ENCODE measurements at regions of chr12 and their contacts with region 1.

Region 1: DNA sequence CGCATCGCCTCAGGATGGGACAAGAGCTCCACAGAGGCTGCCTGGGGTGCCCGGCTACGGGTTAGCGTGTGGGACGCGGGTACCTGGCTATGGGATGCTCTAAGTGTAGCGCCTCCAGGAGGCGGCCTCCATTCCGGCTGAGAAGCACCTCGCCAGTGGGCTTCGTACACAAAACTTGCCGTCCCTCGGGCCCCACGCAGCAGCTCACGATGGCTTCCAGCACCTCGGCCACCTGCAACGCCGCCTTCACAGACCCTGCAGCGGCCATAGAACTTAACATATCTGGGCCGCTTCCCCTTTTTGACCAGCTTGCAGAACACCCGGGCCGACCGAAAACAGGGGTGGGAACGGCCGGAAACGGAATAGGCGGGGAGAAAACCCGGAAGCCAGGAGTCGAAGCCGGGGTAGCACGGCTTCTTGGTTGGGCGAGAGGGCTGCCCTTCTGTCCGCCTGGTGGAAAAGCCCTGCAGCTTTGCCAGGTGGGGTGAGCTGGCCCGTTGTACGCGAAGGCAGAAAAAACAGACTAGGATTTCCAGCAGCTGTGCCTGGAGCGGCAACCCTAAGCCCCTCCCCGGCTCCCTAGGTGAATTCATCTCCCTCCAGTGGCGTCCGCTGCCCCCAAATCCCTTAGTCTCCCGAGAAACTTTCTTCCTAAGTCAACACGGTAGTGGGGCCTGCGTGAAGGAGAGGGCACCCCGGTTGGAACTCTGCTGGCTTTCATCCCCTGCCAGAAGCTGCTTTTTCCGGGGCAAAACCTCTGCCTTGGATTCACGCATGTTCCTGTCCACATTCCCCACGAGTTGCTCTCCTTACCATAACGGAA is at the start of gene BBS10:
- DNase-seq: peak; percentile 86 to 99 (median 93)

Region 2: GRCh38 chr12:75511116-75512048 is 836.9 kb before region 1 on chr12 and contains the start of gene KRR1:
- intact Hi-C with region 1: loop called (anchors 2 kb)
- DNase-seq: peak; percentile 92 to 99 (median 94)

Region 3: GRCh38 chr12:75526655-75527511 is 821.4 kb before region 1 on chr12:
- intact Hi-C with region 1: loop called (anchors 5 kb)
- DNase-seq: peak in 1 of 10 donors; percentile 65

Region 4: GRCh38 chr12:76083904-76084862 is 264.1 kb before region 1 on chr12 and contains the start of gene NAP1L1:
- intact Hi-C with region 1: loop called (anchors 5 kb)
- DNase-seq: peak; percentile 95 to 100 (median 98)

Region 5: DNA sequence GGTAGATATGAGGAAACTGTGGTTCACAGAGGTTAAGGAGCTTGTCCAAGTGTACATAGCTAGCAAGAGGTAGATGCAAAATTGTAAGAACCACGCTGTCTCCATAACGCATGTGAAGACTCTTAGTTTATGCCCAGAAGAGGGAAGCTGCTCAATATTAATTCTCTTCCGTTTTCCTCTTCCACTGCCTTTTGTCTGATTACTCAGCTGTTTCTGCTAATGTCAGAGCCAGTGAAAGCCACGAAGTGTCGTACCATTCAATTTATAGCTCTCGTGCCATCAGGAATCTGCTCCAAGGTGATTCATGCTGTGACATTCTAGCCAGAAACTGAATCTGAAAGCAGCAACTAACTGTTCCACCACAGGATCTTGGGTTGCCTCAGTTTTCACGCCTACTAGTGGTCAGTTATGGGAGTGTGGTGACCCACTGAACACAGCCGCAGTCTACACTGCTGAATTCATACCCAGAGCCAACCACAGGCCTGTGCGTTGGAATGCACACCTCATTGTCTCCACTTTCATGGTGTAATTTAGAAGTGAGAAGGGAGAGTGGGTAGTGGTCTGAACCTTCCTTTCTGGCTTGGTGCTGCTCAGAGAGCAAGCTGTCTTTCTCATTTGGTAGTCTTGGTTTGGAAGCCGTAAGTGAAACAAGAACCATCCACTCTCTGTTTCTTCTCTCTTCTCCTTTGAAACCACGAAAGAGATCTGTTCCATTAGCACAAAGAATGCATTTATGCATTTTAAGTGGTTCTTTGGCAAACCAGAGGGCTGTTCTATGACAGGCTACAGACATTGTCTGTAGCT is 189.6 kb before region 1 on chr12:
- intact Hi-C with region 1: loop called (anchors 10 kb)
- DNase-seq: peak in 4 of 10 donors; percentile 19 to 44 (median 40)

Region 6: GRCh38 chr12:76559400-76560085 is 211.3 kb after region 1 on chr12 and contains the start of gene OSBPL8:
- intact Hi-C with region 1: loop called (anchors 2 kb)
- DNase-seq: peak; percentile 94 to 99 (median 97)